ENCODE measurements at regions of chr10 and their contacts with region 1.

Region 1: GRCh38 chr10:110547139-110547761 is 20.2 kb upstream of the SMC3 start:
- DNase-seq: peak; percentile 86
- H3K4me3 ChIP-seq: no peak overlapping the region
- H3K27ac ChIP-seq: no peak overlapping the region
- H3K4me1 ChIP-seq: peaks cover 5% of the 10 kb centered on the region
- H3K27me3 ChIP-seq: no peaks in the 10 kb centered on the region
- CTCF ChIP-seq: peak; percentile 87

Region 2: GRCh38 chr10:110354322-110354766 is 192.9 kb before region 1 on chr10:
- CTCF ChIA-PET with region 1: interaction called, 19 read pairs
- POLR2A ChIA-PET with region 1: no interaction called
- intact Hi-C with region 1: loop called (anchors 1 kb)
- DNase-seq: peak; percentile 86
- H3K4me3 ChIP-seq: no peak overlapping the region
- H3K27ac ChIP-seq: no peak overlapping the region
- H3K4me1 ChIP-seq: peaks cover 12% of the 10 kb centered on the region
- H3K27me3 ChIP-seq: no peaks in the 10 kb centered on the region
- CTCF ChIP-seq: peak; percentile 95

Measured in A673 (cell line).